Transverse colon (tissue), 4 donors: ENCODE measurements at regions of chr4 and their contacts with region 1.

Region 1: DNA sequence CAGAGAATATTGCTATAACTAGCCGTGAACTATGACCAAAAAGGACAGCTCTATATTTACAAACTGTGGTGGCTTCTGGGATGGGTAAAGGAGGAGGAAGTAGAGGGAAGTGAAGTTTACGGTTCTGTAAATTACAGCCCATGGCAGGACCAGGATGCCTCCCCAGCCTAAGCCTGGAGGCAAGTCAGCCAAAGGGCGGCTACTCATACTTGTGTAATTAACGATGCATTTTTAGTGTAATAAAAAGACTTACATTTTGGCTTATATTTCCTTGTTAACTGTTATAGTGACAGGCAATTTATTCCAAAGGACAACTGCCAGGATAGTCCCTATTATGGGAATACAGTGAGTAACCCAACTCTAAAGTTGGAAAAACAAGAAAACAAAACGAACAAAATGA is 139.9 kb upstream of the OTUD4 start:
- DNase-seq: no peak
- H3K4me3 ChIP-seq: no peak overlapping the region
- H3K27ac ChIP-seq: no peak overlapping the region
- H3K4me1 ChIP-seq: peaks cover 0 to 7% (median 0%) of the 10 kb centered on the region in 4 donors
- H3K27me3 ChIP-seq: no peaks in the 10 kb centered on the region
- CTCF ChIP-seq: no peak
- EP300 ChIP-seq: no peak
- POLR2A ChIP-seq: no peak

Region 2: DNA sequence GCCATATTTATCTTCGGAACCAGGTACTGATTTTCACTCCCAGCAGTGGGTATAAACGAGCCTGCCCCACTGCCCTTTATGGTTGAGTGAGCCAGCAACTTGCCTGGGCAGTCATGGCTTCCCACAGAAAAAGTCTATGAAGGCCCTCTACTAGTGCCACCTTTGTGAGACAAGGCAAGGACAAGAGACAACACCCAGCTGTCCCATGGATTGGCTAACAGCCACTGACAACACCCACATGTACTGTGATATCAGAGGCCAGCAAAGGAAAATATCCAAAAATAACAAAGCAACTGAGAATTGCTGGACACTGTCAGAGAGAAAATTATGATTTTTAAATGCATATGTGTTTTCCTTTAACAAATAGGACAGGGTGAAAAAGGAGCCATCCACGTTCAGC is 1873.8 kb after region 1 on chr4:
- in situ Hi-C with region 1: no loop called
- intact Hi-C with region 1: loop called (anchors 5 kb)
- DNase-seq: no peak
- H3K4me3 ChIP-seq: no peak overlapping the region
- H3K27ac ChIP-seq: no peak overlapping the region
- H3K4me1 ChIP-seq: no peaks in the 10 kb centered on the region
- H3K27me3 ChIP-seq: no peaks in the 10 kb centered on the region
- CTCF ChIP-seq: no peak
- EP300 ChIP-seq: no peak
- POLR2A ChIP-seq: no peak